Body of pancreas (tissue), 4 donors: ENCODE measurements at regions of chr14 and their contacts with region 1.

Region 1: DNA sequence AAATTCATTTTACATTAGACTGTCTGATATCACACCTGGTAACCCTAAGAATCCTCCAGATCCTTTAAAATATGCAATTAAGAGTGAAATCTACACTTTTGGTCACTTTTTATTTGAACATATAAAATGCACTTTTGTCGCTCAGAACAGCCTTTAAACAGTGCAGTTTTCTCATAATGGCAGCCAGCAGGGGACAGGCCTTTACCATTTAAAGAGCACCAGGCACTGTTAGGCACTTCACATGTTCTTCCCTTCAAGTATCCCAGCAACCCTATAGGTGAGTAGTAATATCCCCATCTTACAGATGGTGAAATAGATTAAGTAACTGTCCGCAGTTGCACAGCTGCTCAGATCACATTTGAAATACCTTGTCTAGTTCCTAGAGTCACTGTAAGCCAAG is 11.3 kb upstream of the SAMD4A start:
- DNase-seq: no peak
- ATAC-seq: no peak
- H3K4me3 ChIP-seq: no peak overlapping the region
- H3K27ac ChIP-seq: no peak overlapping the region
- H3K4me1 ChIP-seq: no peaks in the 10 kb centered on the region
- H3K27me3 ChIP-seq: no peaks in the 10 kb centered on the region
- CTCF ChIP-seq: no peak
- POLR2A ChIP-seq: no peak

Region 2: GRCh38 chr14:54776361-54777001 is 220.8 kb after region 1 on chr14:
- intact Hi-C with region 1: loop called (anchors 5 kb)
- DNase-seq: peak in 1 of 4 donors; percentile 46
- ATAC-seq: no peak
- H3K4me3 ChIP-seq: no peak overlapping the region
- H3K27ac ChIP-seq: no peak overlapping the region
- H3K4me1 ChIP-seq: peaks cover 6% of the 10 kb centered on the region
- H3K27me3 ChIP-seq: no peaks in the 10 kb centered on the region
- CTCF ChIP-seq: no peak
- POLR2A ChIP-seq: no peak